Activated CD8-positive, alpha-beta T cell treated with anti-CD3 and anti-CD28 coated beads for 36 hours (primary cell): ENCODE measurements at regions of chr3 and their contacts with region 1.

Region 1: DNA sequence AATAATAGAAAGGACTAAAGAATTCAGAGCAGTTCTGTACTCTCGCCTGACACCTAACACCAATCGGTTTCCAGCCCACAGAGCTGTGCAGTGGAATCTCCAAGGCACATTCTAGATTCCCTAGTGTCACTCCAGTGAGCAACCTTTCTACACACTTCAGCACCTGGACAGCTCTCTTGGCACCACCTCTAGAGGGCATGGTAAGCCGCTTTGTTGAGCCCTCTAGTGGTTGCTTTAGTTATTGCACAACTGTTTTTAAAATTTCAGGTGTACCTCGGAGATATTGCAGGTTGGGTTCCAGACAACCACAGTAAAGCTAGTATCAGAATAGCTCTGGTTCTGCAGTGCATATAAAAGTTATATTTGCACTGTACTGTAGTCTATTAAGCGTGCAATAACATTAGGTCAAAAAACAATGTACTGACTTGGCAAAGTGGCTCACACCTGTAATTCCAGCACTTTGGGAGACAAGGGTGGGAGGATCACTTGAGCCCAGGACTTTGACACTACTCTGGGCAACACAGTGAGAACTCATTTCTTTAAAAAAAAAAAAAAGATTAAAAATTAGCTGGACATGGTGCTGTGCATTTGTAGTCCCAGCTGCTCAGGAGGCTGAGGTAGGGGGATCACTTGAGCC is 26.5 kb upstream of the ERC2 start:
- DNase-seq: peak; percentile 82
- ATAC-seq: peak; percentile 94
- H3K4me3 Mint-ChIP-seq: no peak overlapping the region
- H3K27ac Mint-ChIP-seq: no peak overlapping the region
- H3K4me1 Mint-ChIP-seq: no peaks in the 10 kb centered on the region
- H3K27me3 Mint-ChIP-seq: peaks cover 12% of the 10 kb centered on the region
- CTCF ChIP-seq: peak; percentile 88

Region 2: DNA sequence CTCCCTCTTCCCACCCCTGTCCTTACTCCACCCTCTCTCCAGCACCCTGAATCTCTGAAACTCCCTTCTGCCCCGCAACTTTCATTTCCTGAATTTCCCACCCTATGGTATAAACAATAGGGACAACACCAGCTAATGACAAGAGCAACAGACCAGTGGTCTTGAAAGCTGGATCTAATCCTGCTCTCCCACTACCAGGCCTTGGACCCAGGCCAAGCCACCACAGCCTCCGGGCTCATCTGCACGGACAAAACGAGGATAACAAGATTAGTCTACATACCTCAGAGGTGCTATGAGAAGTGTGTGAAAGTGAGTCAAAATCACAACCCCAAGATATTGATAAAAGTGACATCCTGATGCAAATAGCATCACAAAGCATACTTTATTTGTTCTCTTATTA is 155.1 kb before region 1 on chr3:
- CTCF ChIA-PET with region 1: interaction called, 10 read pairs
- POLR2A ChIA-PET with region 1: no interaction called
- intact Hi-C with region 1: no loop called
- DNase-seq: no peak
- ATAC-seq: no peak
- H3K4me3 Mint-ChIP-seq: no peak overlapping the region
- H3K27ac Mint-ChIP-seq: no peak overlapping the region
- H3K4me1 Mint-ChIP-seq: no peaks in the 10 kb centered on the region
- H3K27me3 Mint-ChIP-seq: peaks cover 8% of the 10 kb centered on the region
- CTCF ChIP-seq: no peak

Region 3: GRCh38 chr3:56476771-56477170 is 18.0 kb before region 1 on chr3:
- CTCF ChIA-PET with region 1: interaction called, 14 read pairs
- POLR2A ChIA-PET with region 1: no interaction called
- intact Hi-C with region 1: no loop called
- DNase-seq: no peak
- ATAC-seq: no peak
- H3K4me3 Mint-ChIP-seq: no peak overlapping the region
- H3K27ac Mint-ChIP-seq: no peak overlapping the region
- H3K4me1 Mint-ChIP-seq: no peaks in the 10 kb centered on the region
- H3K27me3 Mint-ChIP-seq: peaks cover 27% of the 10 kb centered on the region
- CTCF ChIP-seq: no peak

Region 4: GRCh38 chr3:56484122-56484521 is 10.7 kb before region 1 on chr3:
- CTCF ChIA-PET with region 1: interaction called, 11 read pairs
- POLR2A ChIA-PET with region 1: no interaction called
- intact Hi-C with region 1: no loop called
- DNase-seq: no peak
- ATAC-seq: no peak
- H3K4me3 Mint-ChIP-seq: no peak overlapping the region
- H3K27ac Mint-ChIP-seq: no peak overlapping the region
- H3K4me1 Mint-ChIP-seq: no peaks in the 10 kb centered on the region
- H3K27me3 Mint-ChIP-seq: peaks cover 6% of the 10 kb centered on the region
- CTCF ChIP-seq: no peak

Region 5: GRCh38 chr3:56566101-56566500 is 71.3 kb after region 1 on chr3:
- CTCF ChIA-PET with region 1: no interaction called
- POLR2A ChIA-PET with region 1: no interaction called
- intact Hi-C with region 1: no loop called
- DNase-seq: no peak
- ATAC-seq: no peak
- H3K4me3 Mint-ChIP-seq: no peak overlapping the region
- H3K27ac Mint-ChIP-seq: no peak overlapping the region
- H3K4me1 Mint-ChIP-seq: peaks cover 13% of the 10 kb centered on the region
- H3K27me3 Mint-ChIP-seq: no peaks in the 10 kb centered on the region
- CTCF ChIP-seq: no peak